Activated CD4-positive, alpha-beta T cell treated with anti-CD3 and anti-CD28 coated beads, Interleukin-2, amount 10 ng/mL, durations not matched to agents 24 days and 14 days (primary cell): ENCODE measurements at regions of chr9 and their contacts with region 1.

Region 1: GRCh38 chr9:98255578-98256296 is at the start of gene TBC1D2:
- DNase-seq: peak; percentile 99
- H3K4me3 Mint-ChIP-seq: peak within 1 kb of the TSS; percentile 84
- H3K27ac Mint-ChIP-seq: peak within 1 kb of the TSS; percentile 98
- H3K4me1 Mint-ChIP-seq: peaks cover 21% of the 10 kb centered on the region
- H3K27me3 Mint-ChIP-seq: no peaks in the 10 kb centered on the region
- total RNA-seq, gene TBC1D2: 1.6 and 1.8 TPM in 2 replicates

Region 2: GRCh38 chr9:97632985-97633858 is 622.5 kb before region 1 on chr9 and contains the starts of genes NCBP1 and TSTD2:
- intact Hi-C with region 1: loop called (anchors 5 kb)
- DNase-seq: peak; percentile 99
- H3K4me3 Mint-ChIP-seq: peak within 1 kb of the TSS; percentile 95
- H3K27ac Mint-ChIP-seq: peak within 1 kb of the TSS; percentile 99
- H3K4me1 Mint-ChIP-seq: peaks cover 40% of the 10 kb centered on the region
- H3K27me3 Mint-ChIP-seq: no peaks in the 10 kb centered on the region
- total RNA-seq, gene NCBP1: 48.9 and 51.4 TPM in 2 replicates
- total RNA-seq, gene TSTD2: 17.1 and 17.7 TPM in 2 replicates

Region 3: DNA sequence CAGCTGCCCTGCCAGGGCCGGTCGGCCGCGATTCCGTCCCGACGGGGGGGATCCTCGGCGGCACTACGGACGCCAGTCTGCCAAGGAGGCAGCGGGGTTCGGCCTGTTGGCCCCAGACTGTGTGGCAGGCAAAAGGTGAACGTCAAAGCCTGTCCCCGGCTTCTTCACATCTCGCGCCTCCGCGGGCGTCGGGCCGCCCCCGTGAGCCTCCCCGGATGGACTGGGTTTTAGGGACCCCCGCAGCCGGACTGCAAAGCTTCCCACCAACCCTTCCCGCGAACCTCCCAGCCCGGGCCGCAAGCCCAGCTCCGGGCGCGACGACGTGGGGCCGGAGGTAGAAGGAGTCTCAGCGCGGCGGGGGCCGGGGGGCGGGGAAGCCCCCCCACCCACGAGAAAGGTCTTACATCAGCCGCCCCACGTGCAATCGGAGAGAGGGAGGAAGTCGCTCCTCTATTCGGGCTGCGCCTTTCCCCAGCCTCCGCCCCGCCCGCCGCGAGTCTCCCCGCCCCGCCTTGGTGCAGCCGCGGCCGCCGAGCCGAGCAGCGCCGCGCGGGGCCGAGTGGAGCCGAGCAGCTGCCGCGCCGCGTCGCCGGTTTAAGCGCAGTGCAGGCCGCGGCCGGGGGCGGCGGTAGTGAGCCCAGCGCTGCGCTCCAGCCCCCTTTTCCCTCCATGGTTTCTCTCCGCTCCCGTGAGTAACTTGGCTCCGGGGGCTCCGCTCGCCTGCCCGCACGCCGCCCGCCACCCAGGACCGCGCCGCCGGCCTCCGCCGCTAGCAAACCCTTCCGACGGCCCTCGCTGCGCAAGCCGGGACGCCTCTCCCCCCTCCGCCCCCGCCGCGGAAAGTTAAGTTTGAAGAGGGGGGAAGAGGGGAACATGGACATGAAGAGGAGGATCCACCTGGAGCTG is 272.8 kb before region 1 on chr9 and contains the start of gene ANP32B:
- intact Hi-C with region 1: loop called (anchors 1 kb)
- DNase-seq: peak; percentile 98
- H3K4me3 Mint-ChIP-seq: peak within 1 kb of the TSS; percentile 86
- H3K27ac Mint-ChIP-seq: peak within 1 kb of the TSS; percentile 91
- H3K4me1 Mint-ChIP-seq: peaks cover 31% of the 10 kb centered on the region
- H3K27me3 Mint-ChIP-seq: no peaks in the 10 kb centered on the region
- total RNA-seq, gene ANP32B: 332 and 333 TPM in 2 replicates

Region 4: DNA sequence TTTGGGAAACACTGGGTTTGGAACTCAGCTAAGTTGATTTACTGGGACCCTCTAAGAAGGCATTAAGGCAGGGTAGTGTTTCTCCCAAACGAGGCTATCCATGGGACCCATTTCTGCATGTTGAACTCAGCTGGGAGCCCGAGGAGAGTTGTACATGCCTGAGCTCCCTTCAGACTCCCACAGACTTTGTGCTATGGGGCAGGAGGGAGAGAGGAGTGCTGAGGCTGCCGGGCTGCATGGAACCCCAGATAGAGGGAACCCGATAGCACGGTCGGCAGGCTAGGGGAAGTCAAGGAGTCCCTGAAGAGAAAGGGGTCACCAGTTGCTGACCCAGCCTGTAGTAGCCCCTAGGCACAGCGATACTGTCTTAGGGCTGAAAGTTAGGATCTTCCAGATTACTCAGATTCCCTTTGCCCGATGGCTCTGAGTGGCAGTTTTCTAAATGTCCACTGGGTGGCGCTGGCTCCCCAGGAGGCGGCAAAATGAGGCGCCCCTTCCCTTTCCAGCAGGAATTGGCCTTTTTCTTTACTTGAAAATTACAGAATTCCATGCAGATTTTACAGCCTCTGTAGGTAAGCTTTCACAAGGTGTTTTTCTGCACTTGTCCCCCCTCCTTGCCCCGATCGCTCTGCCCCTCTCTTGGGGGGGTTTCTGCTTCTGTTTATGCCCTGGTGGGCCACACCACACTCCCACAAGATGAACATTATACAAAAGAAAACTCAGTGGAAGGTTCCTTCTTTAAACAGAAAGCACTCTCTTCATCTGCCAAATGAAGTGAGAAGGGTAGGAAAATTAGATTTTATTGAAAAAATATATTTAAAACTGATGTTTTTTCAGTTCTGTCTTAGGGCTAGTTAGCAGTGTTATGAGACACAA is 181.4 kb before region 1 on chr9:
- intact Hi-C with region 1: loop called (anchors 2 kb)
- DNase-seq: peak; percentile 91
- H3K4me3 Mint-ChIP-seq: peak overlapping the region; percentile 52
- H3K27ac Mint-ChIP-seq: peak overlapping the region; percentile 89
- H3K4me1 Mint-ChIP-seq: peaks cover 38% of the 10 kb centered on the region
- H3K27me3 Mint-ChIP-seq: no peaks in the 10 kb centered on the region

Region 5: DNA sequence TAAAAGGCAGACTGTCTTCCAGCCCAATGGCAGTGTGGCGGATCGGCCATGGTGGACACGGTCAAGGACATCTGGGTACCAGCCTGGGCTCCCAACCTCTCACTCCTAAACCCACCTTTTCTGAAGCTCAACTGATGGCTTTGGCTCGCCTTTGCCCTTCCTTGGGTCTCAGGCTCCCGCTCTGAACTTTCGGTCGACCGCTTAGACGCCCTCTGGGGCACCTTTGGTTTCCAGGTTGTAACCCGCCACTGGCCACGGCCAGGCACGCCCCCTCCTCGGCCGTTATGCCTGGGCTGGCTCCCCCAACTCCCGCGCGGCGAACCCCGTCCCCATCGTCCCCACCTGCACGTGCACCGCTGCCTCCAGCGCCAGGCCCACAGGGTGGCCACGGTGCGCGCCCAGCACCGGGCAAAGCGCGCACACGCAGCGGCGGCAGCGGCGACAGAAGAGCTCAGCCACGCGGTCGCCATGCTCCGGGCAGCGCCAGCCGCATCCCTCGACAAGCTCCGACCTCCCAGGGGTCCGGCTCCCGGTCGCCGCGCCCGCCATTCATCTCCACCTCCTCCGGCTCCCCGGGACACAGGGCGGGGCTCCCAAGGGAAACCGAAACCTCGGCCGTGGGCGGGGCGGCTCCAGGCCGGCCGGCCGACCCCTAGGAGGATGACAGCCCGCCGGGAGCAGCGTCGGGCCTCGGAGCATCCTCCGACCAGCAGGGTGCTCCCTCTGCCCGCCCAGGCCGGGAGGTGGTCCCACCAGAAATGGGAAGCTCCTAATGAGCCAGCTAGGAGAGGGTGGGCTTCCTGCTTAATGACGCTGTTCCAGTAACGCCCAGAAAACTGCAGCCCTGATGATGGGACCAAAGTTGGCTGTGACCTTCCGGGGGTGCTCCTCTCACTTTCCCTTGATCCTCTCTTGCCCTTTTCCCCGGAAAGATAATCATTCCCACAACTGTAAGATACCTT is 136.8 kb before region 1 on chr9 and contains the start of gene TRIM14:
- intact Hi-C with region 1: loop called (anchors 1 kb)
- DNase-seq: peak; percentile 93
- H3K4me3 Mint-ChIP-seq: peak within 1 kb of the TSS; percentile 87
- H3K27ac Mint-ChIP-seq: peak within 1 kb of the TSS; percentile 89
- H3K4me1 Mint-ChIP-seq: peaks cover 36% of the 10 kb centered on the region
- H3K27me3 Mint-ChIP-seq: no peaks in the 10 kb centered on the region
- total RNA-seq, gene TRIM14: 47.3 and 47.8 TPM in 2 replicates